ENCODE measurements at regions of chr11 and their contacts with region 1.

Region 1: GRCh38 chr11:34357701-34358257 is at the start of gene ABTB2:
- DNase-seq: peak; percentile 96
- CTCF ChIP-seq: no peak

Region 2: DNA sequence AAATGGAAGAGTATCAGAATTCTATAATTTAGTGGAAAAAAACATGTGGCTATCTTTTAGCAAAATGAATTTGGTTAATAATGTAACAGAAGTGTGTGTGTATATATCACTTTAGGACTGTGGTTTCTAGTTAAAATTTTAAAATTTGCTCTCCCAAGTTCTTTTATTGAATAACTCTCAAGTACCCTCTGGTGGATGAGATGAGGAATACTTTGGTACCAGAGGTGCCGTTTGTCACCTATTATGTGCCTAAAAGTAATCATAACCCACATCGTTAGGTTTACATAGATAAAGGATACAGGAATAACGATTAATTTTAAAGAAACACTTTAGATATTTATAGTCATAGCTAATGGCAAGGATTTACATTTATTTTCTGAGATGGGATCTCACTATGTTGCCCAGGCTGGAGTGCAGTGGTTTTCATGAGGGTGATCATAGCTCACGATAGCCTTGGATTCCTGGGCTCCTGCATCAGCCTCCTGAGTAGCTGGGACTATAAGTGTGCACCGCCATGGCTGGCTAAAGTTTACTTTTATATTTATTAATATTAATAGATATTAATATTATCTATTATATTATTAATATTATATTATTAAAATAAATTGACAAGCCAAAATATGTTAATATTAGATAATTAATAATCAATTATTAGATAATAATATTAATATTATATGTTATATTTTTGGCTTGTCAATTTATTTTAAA is 372.9 kb before region 1 on chr11:
- in situ Hi-C with region 1: no loop called
- DNase-seq: no peak
- CTCF ChIP-seq: no peak

Region 3: DNA sequence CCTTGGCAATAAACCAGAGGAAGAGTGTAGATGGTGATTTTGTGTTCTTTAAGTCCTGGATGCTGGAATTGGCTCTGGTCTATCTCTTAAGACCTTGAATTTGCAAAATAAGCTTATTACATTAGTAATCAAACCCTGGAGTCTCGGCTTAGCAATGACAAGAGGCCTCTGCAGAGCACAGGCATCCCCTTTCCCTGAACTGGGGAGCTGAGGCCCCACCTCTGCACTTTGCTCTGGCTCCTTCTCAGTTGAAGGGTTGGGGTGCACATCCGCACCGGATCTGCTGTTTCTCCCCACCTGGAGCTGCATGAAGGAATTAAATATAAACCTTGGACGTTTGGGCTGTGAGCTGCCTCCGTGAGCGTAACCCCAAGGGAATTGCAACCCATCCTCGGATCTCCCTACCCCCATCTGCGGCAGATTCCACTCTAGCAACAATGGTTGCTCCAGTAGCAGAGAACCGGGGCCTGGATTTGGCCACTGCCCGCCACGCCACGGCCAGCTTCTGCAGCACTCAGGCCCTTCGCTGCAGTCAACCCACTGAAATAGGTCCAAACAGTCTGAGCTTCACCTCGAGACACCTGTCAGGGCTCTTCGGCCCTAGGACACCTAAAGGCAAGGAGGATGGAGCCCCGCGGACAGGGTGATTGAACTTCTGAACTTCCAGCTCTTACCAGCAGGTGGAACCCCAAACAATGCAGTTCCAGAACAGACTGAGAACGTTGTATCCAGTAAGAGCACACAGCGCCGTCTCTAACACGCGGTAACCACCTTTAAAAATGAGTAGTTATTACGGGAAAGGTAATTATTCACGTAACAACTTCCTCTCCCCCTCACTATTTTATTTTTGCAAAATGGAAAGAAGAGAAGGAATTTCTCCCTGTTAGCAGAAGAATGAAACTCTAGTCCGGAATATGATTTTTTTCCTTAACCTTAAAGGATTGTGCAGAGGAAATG is 361.0 kb before region 1 on chr11:
- in situ Hi-C with region 1: loop called (anchors 5 kb)
- DNase-seq: peak; percentile 79
- CTCF ChIP-seq: peak; percentile 72

Region 4: GRCh38 chr11:34185926-34186841 is 171.6 kb before region 1 on chr11:
- in situ Hi-C with region 1: loop called (anchors 10 kb)
- DNase-seq: no peak
- CTCF ChIP-seq: no peak